AG04450 (cell line): ENCODE measurements at regions of chr7 and their contacts with region 1.

Region 1: DNA sequence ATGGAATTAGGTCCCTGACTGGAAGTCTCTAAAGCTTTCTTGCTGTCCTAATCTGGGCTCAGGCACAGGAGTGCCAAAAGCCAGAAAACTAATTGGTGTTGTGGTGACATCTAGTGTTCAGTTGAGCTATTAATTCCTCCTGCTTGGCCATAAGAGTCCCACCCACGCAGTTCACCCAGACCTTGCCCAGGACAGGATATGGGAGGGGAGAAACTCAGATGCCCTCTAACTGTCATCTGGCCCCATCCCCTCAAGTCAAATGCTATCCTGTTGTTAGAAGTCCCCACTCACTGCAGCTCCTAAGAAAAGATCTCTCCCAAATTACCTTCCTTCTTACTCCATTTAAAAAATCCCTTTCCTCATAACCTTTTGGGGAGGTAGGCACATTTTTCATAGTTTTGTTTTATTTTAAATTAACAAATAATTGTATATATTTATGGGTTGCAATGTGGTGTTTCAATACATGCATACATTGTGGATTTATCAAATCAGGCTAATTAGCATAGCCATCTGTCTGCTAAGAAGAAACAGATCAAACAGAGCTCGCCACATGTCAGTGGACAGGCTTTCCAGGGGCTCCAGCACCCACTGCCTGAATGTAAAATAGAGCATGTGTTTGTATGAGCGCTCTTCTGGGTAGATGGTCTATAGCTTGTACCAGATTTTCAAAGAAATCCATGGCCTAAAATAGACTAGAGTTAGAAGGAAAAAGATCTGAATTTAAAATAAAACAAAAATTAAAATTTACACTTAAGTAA is 84.0 kb downstream of the GSAP start:
- DNase-seq: peak; percentile 76
- H3K4me3 ChIP-seq: no peak overlapping the region
- H3K27ac ChIP-seq: no peak overlapping the region
- H3K27me3 ChIP-seq: no peaks in the 10 kb centered on the region
- CTCF ChIP-seq: peak; percentile 71

Region 2: DNA sequence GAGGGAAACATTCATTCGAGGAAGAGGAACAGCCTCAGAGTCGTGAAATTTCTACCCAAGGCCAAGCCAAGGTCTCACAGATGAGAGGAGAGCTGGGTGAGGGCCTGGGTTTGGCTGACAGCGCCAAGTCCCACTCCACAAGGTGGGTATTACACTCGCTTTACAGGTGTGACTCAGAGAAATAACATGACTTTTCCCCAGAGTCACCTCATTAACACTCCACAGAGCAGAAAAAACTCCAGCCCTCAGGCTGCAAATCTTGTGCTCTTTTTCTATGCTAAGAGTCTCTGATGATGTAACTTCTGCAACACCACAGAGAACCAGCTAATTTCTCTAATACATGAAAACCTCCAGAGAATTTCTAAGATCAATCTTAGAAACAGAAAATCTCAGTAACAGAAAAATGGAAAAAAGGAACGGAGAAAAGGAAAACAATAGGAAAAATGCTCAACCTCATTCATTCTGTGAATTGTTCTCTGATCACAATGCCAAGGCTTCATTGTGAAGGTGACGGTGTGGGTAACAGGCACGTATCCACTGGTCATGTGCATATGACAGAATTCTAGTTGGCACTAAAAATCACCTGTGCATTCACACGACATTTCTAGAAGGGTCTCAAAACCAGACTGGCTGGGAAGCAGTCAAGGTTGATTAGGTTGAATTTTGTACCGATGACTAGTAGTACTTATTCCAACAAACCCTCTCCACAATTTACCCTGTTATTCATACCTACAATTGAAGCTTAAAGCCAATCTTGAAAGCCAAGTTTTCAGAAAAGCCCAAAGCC is 993.6 kb before region 1 on chr7:
- CTCF ChIA-PET with region 1: no interaction called
- POLR2A ChIA-PET with region 1: interaction called, 10 read pairs
- DNase-seq: no peak
- H3K4me3 ChIP-seq: no peak overlapping the region
- H3K27ac ChIP-seq: peak overlapping the region; percentile 31
- H3K27me3 ChIP-seq: no peaks in the 10 kb centered on the region
- CTCF ChIP-seq: no peak

Region 3: DNA sequence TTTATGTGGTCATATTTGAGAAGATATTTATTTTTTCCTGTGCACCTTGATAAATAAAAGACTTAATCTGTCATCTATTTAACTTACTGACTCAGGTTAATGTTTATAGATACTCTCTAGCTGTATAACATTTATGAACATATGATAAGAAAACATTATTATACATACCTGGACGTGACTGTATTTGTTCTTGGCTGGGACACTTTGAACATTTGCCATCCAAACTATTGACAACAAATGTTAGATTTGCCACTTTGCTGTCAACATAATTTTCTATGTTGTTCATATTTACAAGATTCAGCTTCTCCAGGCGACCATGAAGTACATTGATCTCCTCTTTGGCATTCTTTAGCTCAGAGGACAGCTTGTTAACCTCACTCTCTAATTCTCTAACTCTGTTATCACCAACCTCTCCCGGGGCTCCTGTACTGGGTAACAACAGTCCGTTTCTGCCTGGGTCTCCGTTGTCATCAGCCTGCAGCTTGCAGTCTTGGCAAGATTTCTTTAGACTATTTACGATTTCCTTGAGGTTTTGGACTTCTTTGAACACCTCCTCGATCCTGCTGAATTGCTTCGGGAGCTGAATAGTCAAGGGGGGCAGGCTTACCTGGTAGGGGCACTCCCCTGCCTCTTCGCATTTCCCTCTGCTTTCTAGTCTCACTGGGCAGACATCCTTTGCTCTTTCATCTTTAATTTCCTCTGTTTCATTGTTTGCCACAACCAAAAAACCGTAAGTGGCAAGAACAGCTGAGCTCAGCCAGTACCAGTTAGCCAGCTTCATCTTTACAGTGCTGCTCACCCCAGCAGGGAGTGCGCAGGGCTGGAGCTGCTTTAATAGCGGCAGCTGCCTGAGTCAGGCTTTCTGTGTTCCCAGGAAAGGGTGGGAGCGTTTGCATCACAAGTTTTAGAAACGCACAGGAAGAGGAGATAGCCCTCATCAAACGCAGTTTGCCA is 132.8 kb before region 1 on chr7 and contains the start of gene FGL2:
- CTCF ChIA-PET with region 1: interaction called, 11 read pairs
- POLR2A ChIA-PET with region 1: no interaction called
- DNase-seq: peak; percentile 15
- H3K4me3 ChIP-seq: peak within 1 kb of the TSS; percentile 64
- H3K27ac ChIP-seq: no peak within 1 kb of the TSS
- H3K27me3 ChIP-seq: no peaks in the 10 kb centered on the region
- CTCF ChIP-seq: no peak
- polyA plus RNA-seq, gene FGL2: 28.8 TPM in 2 replicates

Region 4: GRCh38 chr7:77258014-77258413 is 74.1 kb before region 1 on chr7:
- CTCF ChIA-PET with region 1: interaction called, 14 read pairs
- POLR2A ChIA-PET with region 1: interaction called, 13 read pairs
- DNase-seq: peak; percentile 55
- H3K4me3 ChIP-seq: no peak overlapping the region
- H3K27ac ChIP-seq: peak overlapping the region; percentile 12
- H3K27me3 ChIP-seq: no peaks in the 10 kb centered on the region
- CTCF ChIP-seq: no peak

Region 5: GRCh38 chr7:77887567-77887966 is 555.5 kb after region 1 on chr7:
- CTCF ChIA-PET with region 1: no interaction called
- POLR2A ChIA-PET with region 1: no interaction called
- DNase-seq: no peak
- H3K4me3 ChIP-seq: no peak overlapping the region
- H3K27ac ChIP-seq: no peak overlapping the region
- H3K27me3 ChIP-seq: no peaks in the 10 kb centered on the region
- CTCF ChIP-seq: no peak